AG04449 (cell line): ENCODE measurements at regions of chr1 and their contacts with region 1.

Region 1: DNA sequence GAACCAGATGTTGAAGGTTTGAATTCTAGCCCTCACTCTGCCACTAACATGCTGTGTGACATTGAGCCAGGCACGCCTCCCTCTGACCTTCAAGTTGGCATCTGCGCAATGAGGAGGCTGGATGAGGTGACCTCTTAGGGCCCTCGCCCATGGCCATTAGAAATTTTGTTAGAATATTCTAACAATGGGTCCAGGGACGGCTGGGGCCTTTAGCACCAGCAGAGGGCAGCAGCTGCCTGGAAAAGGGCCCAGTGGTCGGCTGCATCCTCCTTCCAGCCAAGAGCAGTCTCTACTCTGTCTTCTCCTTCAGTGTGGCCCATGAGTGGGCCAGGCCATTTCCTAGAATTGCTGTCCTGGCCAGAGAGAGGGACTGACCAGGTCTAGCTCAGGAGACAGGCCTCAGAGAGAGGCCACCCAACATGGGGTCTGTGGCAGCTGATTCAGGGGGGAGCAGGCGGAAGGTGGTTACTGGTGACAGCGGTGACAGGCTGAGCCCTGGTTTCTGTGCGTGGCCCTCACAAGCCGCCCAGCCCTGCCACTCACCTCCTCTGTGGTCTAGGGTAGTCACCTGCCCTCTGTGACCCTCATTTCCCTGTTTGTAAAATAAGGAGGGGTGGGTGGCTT is 101.3 kb upstream of the ACTL8 start:
- DNase-seq: no peak
- H3K4me3 ChIP-seq: no peak overlapping the region
- CTCF ChIP-seq: peak; percentile 89

Region 2: GRCh38 chr1:17844135-17844826 is 190.4 kb after region 1 on chr1:
- CTCF ChIA-PET with region 1: no interaction called
- POLR2A ChIA-PET with region 1: no interaction called
- DNase-seq: no peak
- H3K4me3 ChIP-seq: no peak overlapping the region
- CTCF ChIP-seq: peak; percentile 2

Region 3: GRCh38 chr1:17909634-17910033 is 255.8 kb after region 1 on chr1:
- CTCF ChIA-PET with region 1: interaction called, 45 read pairs
- POLR2A ChIA-PET with region 1: no interaction called
- DNase-seq: no peak
- H3K4me3 ChIP-seq: no peak overlapping the region
- CTCF ChIP-seq: peak; percentile 17